ENCODE measurements at regions of chr18 and their contacts with region 1.

Region 1: GRCh38 chr18:3447895-3448837 is 1.8 kb upstream of the TGIF1 start:
- DNase-seq: peak; percentile 96
- H3K4me3 Mint-ChIP-seq: peak overlapping the region; percentile 96
- H3K27ac Mint-ChIP-seq: peak overlapping the region; percentile 99
- H3K4me1 Mint-ChIP-seq: peaks cover 35% of the 10 kb centered on the region
- H3K27me3 Mint-ChIP-seq: no peaks in the 10 kb centered on the region

Region 2: DNA sequence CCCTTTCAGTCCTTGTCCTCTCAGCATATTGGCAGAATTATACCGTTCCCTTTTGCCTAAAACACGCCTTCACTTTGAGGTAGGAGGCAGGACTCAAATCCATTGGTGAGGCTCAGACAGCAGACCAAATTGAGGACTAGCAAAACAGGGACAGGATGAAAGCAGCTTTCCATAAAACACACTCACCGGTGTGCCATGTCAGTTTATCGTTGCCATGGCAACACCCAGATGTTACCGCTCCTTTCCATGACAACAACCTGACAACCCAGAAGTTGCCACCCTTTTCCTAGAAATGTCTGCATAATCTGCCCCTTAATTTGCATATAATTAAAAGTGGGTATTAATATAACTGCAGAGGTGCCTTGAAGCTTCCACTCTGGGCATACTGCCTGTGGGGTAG is 1607.3 kb before region 1 on chr18:
- intact Hi-C with region 1: no loop called
- DNase-seq: no peak
- H3K4me3 Mint-ChIP-seq: no peak overlapping the region
- H3K27ac Mint-ChIP-seq: no peak overlapping the region
- H3K4me1 Mint-ChIP-seq: no peaks in the 10 kb centered on the region
- H3K27me3 Mint-ChIP-seq: no peaks in the 10 kb centered on the region

Region 3: DNA sequence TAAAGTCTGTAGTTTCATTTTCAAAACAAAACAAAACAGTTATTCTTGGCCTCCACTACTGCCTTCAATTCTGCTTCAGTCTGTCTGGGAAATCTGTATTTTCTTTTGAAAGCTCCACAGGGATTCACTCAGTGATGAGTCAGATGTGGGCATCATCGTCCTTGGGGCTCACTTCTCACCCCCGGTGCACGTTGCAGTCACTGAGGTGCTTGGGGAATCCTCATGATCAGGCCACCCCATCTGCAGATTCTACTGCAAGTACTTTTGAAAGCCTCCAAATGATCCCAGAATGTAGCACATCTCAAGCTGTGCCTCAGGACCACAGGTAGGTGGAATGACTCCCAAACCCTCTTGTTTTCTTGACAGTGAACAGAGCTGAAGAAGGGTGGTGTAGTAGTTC is 469.5 kb before region 1 on chr18:
- intact Hi-C with region 1: loop called (anchors 5 kb)
- DNase-seq: peak; percentile 76
- H3K4me3 Mint-ChIP-seq: peak overlapping the region; percentile 81
- H3K27ac Mint-ChIP-seq: peak overlapping the region; percentile 93
- H3K4me1 Mint-ChIP-seq: peaks cover 73% of the 10 kb centered on the region
- H3K27me3 Mint-ChIP-seq: no peaks in the 10 kb centered on the region

Region 4: DNA sequence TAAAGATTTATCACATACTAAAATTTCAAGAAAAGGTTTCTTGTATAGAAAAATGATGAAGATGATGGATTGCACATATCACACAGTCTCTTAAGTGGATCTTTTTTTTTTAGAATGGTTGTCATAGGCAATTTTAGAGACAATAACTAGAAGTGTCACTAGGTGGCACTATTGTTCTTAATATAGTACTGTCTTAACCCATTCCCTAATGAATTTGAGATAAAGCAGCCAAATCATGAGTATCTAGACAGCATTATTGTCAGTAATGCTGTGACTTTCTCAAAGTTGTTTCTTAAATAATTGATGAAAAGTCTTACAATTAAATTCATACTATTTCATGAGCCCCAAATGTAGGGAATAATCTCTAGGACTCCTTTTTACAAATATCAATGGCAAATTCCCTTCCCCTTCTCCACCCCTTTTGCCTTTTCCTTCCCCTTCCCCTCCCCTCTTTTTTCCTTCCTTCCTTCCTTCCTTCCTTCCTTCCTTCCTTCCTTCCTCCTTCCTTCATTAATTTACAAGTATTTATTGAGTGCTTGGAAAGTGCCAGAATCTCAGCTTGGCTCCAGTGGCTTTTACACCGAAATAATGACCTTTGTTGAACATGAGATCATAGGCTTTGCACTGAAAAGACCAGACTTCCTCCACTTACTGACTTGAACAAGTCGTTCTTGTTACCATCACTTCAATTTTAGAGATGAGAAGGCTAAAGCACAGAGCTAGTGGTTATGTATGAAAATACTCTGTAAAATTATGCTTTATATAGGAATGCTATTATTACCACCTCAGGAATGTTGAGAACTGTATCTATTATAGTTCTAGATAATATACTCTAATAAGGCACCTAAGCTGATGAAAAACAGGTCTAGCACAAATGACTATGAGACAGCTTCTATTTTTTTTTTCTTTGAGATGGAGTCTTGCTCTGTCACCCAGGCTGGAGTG is 166.4 kb before region 1 on chr18:
- intact Hi-C with region 1: loop called (anchors 2 kb)
- DNase-seq: peak; percentile 79
- H3K4me3 Mint-ChIP-seq: no peak overlapping the region
- H3K27ac Mint-ChIP-seq: no peak overlapping the region
- H3K4me1 Mint-ChIP-seq: peaks cover 4% of the 10 kb centered on the region
- H3K27me3 Mint-ChIP-seq: peaks cover 3% of the 10 kb centered on the region

Region 5: GRCh38 chr18:3411854-3412268 is 36.3 kb before region 1 on chr18:
- intact Hi-C with region 1: loop called (anchors 5 kb)
- DNase-seq: peak; percentile 75
- H3K4me3 Mint-ChIP-seq: peak overlapping the region; percentile 66
- H3K27ac Mint-ChIP-seq: peak overlapping the region; percentile 53
- H3K4me1 Mint-ChIP-seq: peaks cover 4% of the 10 kb centered on the region
- H3K27me3 Mint-ChIP-seq: peaks cover 2% of the 10 kb centered on the region

Region 6: DNA sequence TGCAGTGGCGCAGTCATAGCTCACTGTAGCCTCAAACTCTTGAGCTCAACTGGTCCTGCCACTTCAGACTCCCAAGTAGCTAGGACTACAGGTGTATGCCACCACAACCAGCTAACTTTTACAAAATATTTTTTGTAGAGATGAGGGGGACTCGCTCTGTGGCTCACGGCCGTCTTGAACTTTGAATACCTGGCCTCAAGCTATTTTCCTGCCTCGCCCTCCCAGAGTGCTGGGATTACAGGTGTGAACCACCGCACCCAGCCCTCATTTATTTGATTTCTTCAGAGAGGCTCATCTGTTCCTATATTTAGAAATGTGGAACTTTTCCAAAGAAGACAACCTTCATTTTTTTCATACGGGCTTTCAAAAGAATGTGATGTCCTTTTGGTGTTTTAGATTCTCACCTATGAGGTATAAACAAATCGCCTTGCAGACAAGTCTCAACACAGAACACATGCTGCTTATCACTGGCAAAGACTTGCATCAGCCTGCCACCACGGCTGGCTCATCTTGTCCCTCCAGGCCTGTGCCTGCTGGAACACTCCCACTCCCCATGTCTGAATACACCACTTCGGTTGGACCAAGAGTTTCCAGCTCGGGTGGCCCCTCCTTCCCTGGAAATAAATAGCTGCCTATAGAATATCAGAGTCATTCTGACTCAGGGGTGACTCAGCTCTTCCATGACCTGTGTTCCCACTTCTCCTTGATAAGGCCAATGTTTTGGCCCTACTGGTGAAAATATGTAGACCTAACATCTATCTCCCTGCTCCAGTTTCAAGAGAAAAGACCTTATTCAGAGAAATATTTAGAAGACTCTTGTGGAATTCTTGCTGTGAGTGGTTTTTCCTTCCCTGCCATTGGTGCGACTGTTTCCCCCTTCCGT is 204.5 kb after region 1 on chr18:
- intact Hi-C with region 1: loop called (anchors 1 kb)
- DNase-seq: peak; percentile 77
- H3K4me3 Mint-ChIP-seq: peak overlapping the region; percentile 54
- H3K27ac Mint-ChIP-seq: peak overlapping the region; percentile 92
- H3K4me1 Mint-ChIP-seq: peaks cover 41% of the 10 kb centered on the region
- H3K27me3 Mint-ChIP-seq: no peaks in the 10 kb centered on the region

Measured in activated CD4-positive, alpha-beta T cell treated with anti-CD3 and anti-CD28 coated beads, Interleukin-2, amount 10 ng/mL, durations not matched to agents 24 days and 14 days (primary cell).